Aorta (tissue), 5 donors: ENCODE measurements at regions of chr10 and their contacts with region 1.

Region 1: DNA sequence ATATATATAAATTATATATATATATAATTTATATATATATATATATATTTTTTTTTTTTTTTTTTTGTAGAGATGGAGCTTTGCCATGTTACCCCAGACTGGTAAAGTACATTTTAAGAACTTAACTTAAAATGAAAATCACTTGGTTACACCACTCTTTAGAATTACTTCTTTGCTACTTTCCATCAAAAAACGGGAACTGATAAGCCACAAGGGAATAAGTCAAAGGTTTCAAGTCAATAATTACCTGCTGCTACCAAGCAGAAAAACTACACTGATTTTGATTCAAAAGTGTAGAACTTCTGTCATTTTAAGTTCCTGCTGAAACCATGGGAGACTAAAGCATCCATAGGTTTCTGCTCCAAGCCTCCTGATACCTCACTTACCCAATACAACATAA is 12.2 kb downstream of the PPA1 start:
- DNase-seq: no peak
- ATAC-seq: no peak
- H3K4me3 ChIP-seq: no peak overlapping the region
- H3K27ac ChIP-seq: no peak overlapping the region
- H3K4me1 ChIP-seq: no peaks in the 10 kb centered on the region
- H3K27me3 ChIP-seq: no peaks in the 10 kb centered on the region

Region 2: GRCh38 chr10:70074165-70074564 is 146.9 kb before region 1 on chr10:
- intact Hi-C with region 1: no loop called
- DNase-seq: no peak
- ATAC-seq: no peak
- H3K4me3 ChIP-seq: no peak overlapping the region
- H3K27ac ChIP-seq: no peak overlapping the region
- H3K4me1 ChIP-seq: no peaks in the 10 kb centered on the region
- H3K27me3 ChIP-seq: no peaks in the 10 kb centered on the region

Region 3: DNA sequence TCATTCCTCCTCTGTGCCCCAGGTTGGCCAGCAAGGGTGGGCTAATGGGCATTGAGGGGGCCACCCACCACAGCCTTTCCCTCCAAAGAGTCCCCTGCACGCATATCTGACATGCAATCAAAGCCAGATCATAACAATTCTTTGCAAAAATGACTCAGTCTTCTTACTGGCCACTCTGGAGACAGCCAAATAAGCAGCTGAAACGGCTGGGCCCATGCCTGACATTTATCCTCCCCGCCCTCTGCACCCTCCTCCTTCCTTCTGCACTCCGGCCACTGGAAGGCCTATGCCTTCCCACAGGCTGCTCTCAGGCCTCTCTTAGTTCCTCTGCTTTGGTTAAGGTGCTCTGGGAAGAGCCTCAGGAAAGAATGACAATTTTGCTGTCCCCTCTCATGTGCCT is 91.9 kb after region 1 on chr10:
- intact Hi-C with region 1: no loop called
- DNase-seq: peak; percentile 49 to 71
- ATAC-seq: no peak
- H3K4me3 ChIP-seq: no peak overlapping the region
- H3K27ac ChIP-seq: no peak overlapping the region
- H3K4me1 ChIP-seq: no peaks in the 10 kb centered on the region
- H3K27me3 ChIP-seq: no peaks in the 10 kb centered on the region

Region 4: GRCh38 chr10:70363971-70364771 is 143.1 kb after region 1 on chr10:
- intact Hi-C with region 1: loop called (anchors 1 kb)
- DNase-seq: peak; percentile 94 to 96
- ATAC-seq: peak; percentile 97
- H3K4me3 ChIP-seq: no peak overlapping the region
- H3K27ac ChIP-seq: peak overlapping the region; percentile 12 to 65
- H3K4me1 ChIP-seq: no peaks in the 10 kb centered on the region
- H3K27me3 ChIP-seq: no peaks in the 10 kb centered on the region